Activated CD4-positive, alpha-beta T cell treated with anti-CD3 and anti-CD28 coated beads for 36 hours (primary cell): ENCODE measurements at regions of chr19 and their contacts with region 1.

Region 1: GRCh38 chr19:6862673-6863078 is 24.7 kb upstream of the ADGRE1 start:
- DNase-seq: peak; percentile 96
- ATAC-seq: peak; percentile 83
- H3K4me3 Mint-ChIP-seq: peak overlapping the region; percentile 72
- H3K27ac Mint-ChIP-seq: peak overlapping the region; percentile 89
- H3K4me1 Mint-ChIP-seq: peaks cover 14% of the 10 kb centered on the region
- H3K27me3 Mint-ChIP-seq: no peaks in the 10 kb centered on the region

Region 2: DNA sequence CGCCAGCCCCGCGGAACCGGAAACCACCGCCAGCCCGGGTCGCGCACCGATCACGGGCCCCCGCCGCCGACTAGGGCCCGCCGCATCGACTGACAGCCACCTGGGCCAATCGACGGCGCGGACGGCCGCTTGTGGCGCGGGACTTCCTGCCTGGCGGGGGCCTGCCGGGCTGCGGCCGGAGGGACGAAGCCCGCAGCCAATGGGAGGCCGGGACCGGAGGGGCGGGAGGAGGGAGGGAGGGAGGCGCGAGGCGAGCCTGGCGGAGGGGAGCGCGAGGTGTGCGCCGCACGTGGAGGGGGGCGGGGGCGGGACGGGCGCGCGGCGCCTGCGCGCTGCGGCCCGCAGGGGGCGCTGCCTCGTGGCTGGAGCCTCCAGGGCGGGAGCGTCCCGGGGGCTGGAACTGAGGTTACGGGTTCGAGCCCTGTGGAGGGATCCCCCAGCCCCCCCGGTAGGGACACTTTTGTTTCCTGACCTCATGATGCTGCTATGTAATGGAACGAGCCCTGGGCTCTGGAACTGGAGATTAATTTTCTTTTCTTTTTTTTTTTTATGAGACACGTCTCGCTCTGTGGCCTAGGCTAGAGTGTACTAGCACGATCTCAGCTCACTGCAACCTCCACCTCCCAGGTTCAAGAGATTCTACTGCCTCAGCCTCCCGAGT is 582.6 kb before region 1 on chr19 and contains the start of gene MLLT1:
- CTCF ChIA-PET with region 1: no interaction called
- POLR2A ChIA-PET with region 1: no interaction called
- intact Hi-C with region 1: loop called in 1 of 2 experiments (anchors 1 kb)
- DNase-seq: peak; percentile 98
- ATAC-seq: peak; percentile 98
- H3K4me3 Mint-ChIP-seq: peak within 1 kb of the TSS; percentile 98
- H3K27ac Mint-ChIP-seq: peak within 1 kb of the TSS; percentile 93
- H3K4me1 Mint-ChIP-seq: peaks cover 38% of the 10 kb centered on the region
- H3K27me3 Mint-ChIP-seq: peaks cover 2% of the 10 kb centered on the region
- total RNA-seq, gene MLLT1: 45.0 to 46.6 TPM

Region 3: GRCh38 chr19:6424939-6425731 is 437.5 kb before region 1 on chr19:
- CTCF ChIA-PET with region 1: interaction called, 3 read pairs
- POLR2A ChIA-PET with region 1: interaction called, 4 read pairs
- intact Hi-C with region 1: loop called in 1 of 2 experiments (anchors 1 kb)
- DNase-seq: peak; percentile 100
- ATAC-seq: peak; percentile 88
- H3K4me3 Mint-ChIP-seq: peak overlapping the region; percentile 73
- H3K27ac Mint-ChIP-seq: peak overlapping the region; percentile 98
- H3K4me1 Mint-ChIP-seq: peaks cover 31% of the 10 kb centered on the region
- H3K27me3 Mint-ChIP-seq: no peaks in the 10 kb centered on the region

Region 4: GRCh38 chr19:6616011-6616410 is 246.7 kb before region 1 on chr19:
- CTCF ChIA-PET with region 1: interaction called, 4 read pairs
- POLR2A ChIA-PET with region 1: no interaction called
- intact Hi-C with region 1: loop called in 1 of 2 experiments (anchors 1 kb)
- DNase-seq: peak; percentile 53
- ATAC-seq: peak; percentile 88
- H3K4me3 Mint-ChIP-seq: no peak overlapping the region
- H3K27ac Mint-ChIP-seq: peak overlapping the region; percentile 29
- H3K4me1 Mint-ChIP-seq: peaks cover 29% of the 10 kb centered on the region
- H3K27me3 Mint-ChIP-seq: peaks cover 32% of the 10 kb centered on the region

Region 5: DNA sequence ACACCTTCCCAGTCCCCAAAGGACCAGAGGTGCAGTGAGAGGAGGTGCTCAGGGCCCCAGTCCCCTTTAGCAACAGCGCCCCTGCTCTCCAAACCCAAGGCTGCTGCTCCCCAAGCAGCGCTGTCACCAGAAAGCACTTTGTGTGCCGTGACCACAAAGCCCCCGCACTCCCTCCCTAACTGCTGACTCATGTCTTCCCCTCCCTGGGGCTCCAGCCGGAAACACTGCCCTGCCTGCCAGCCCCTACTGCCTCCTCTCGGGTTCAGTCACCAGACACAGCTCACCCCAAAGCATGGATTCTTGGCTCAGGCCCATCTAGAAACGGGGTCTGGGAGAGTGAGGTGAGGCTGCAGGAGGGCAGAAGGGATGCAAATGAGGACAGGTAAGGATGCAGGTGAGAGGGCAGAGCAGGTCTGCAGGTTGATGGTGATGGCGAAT is 187.8 kb before region 1 on chr19:
- CTCF ChIA-PET with region 1: no interaction called
- POLR2A ChIA-PET with region 1: no interaction called
- intact Hi-C with region 1: loop called in 1 of 2 experiments (anchors 2 kb)
- DNase-seq: peak; percentile 97
- ATAC-seq: peak; percentile 61
- H3K4me3 Mint-ChIP-seq: peak overlapping the region; percentile 57
- H3K27ac Mint-ChIP-seq: peak overlapping the region; percentile 93
- H3K4me1 Mint-ChIP-seq: peaks cover 75% of the 10 kb centered on the region
- H3K27me3 Mint-ChIP-seq: no peaks in the 10 kb centered on the region

Region 6: DNA sequence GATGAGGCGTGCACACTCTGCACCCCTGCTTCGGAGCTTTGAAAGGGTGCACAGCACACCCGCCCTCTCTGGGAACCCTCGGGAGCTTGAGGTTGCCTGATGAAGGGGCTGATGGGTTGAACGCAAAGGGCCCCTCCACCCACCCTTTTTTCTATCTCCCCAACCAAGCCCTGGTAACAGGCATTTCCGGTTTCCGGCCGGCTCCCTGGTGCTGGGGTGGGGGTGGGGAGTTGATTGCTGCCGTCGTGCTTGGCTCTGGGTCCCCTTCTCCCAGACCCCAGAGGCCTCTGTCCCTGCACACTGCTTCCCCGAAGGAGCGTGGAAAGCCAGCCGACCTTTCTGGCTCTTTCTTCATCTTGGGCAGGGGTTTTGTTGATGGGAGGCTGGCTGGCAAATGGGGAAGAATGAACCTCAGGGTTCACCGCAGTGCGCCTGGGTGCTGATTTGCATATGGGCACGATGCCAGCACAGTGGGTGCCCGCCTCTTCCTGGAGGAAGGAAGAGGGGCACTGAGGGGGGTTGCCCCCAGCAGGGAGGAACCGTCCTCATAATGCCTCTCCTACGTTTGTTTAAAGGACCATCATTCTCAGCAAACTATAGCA is 61.1 kb before region 1 on chr19:
- CTCF ChIA-PET with region 1: interaction called, 4 read pairs
- POLR2A ChIA-PET with region 1: no interaction called
- intact Hi-C with region 1: loop called in 1 of 2 experiments (anchors 1 kb)
- DNase-seq: peak; percentile 90
- ATAC-seq: peak; percentile 75
- H3K4me3 Mint-ChIP-seq: peak overlapping the region; percentile 82
- H3K27ac Mint-ChIP-seq: peak overlapping the region; percentile 98
- H3K4me1 Mint-ChIP-seq: peaks cover 72% of the 10 kb centered on the region
- H3K27me3 Mint-ChIP-seq: no peaks in the 10 kb centered on the region